Endothelial cell of umbilical vein (primary cell): ENCODE measurements at regions of chr12 and their contacts with region 1.

Region 1: GRCh38 chr12:105474672-105475071 is 144.2 kb downstream of the C12orf75 start:
- DNase-seq: peak; percentile 62
- H3K4me3 ChIP-seq: no peak overlapping the region
- H3K27ac ChIP-seq: peak overlapping the region; percentile 4
- H3K4me1 ChIP-seq: peaks cover 67% of the 10 kb centered on the region
- H3K27me3 ChIP-seq: no peaks in the 10 kb centered on the region
- CTCF ChIP-seq: no peak
- POLR2A ChIP-seq: no peak

Region 2: DNA sequence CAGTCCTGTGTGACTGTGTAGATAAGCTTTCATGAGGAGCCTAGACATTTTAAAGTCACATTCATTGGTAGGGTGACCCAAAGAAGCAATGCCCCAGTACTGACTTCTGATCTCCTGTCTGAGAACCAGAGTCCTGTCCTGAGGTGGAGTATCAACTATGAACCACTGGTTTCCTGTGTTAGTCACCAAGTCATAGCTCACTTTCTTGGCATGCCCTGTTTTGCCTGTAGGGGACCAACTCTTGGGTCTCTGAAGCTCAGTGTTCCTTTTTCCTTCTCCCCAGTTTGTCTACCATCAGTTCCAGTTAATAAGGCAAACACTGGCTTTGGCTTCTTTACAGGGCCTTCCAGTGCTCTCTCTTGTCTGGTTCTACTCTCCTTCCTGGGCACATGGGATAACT is 46.8 kb before region 1 on chr12:
- CTCF ChIA-PET with region 1: interaction called, 7 read pairs
- POLR2A ChIA-PET with region 1: no interaction called
- dilution Hi-C with region 1: no loop called
- intact Hi-C with region 1: loop called (anchors 2 kb)
- DNase-seq: peak; percentile 76
- H3K4me3 ChIP-seq: no peak overlapping the region
- H3K27ac ChIP-seq: peak overlapping the region; percentile 46
- H3K4me1 ChIP-seq: peaks cover 16% of the 10 kb centered on the region
- H3K27me3 ChIP-seq: no peaks in the 10 kb centered on the region
- CTCF ChIP-seq: peak; percentile 27 to 39
- POLR2A ChIP-seq: no peak